CD14-positive monocyte (primary cell): ENCODE measurements at regions of chr5 and their contacts with region 1.

Region 1: DNA sequence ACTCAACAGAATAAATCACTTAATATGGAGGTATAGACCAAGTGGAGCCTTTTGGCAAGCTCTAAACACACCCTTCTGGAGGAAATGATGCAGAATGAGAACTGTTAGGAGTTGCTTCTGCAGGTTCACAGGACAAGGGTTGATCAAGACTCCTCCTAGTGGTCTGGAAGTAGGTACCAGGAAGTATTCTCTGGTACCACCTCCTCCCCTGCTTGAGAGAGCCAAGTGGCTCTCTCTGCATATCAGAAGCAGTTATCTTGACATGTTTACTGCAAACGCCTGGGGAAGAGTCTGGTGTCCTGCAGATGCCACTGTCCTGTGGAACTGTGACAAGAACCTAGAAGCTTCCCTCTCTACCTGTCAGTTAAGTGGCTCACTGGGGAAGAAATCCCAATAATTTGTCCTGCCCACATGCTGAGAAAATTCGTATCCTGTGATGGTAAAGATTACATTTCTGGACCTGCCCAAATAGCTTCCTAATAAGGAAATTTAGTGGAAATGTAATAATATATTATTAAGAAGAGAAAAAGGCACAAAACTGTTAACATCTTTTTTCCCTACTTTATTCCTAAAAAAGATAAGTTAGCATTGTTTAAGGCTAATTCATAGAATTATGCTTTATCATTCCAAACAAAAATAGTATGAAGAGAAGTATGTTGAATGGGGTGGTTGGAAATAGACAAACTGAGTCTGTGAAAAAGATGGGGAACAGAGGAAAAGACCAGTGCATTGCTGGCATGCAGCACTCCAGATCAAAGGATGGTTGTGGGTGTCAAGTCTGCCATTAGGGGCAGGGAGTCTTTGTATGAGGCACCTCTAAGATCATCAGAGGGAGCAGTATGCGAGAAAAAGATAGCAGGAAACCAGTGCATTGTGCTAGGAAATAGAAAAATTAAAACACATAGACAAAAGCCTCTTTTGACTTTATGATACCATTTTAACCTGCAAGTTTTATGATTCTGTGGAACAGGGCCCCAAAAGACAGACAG is 118.8 kb downstream of the CDC42SE2 start:
- DNase-seq: peak; percentile 56 to 72 (median 61)
- H3K4me3 ChIP-seq: no peak overlapping the region
- H3K4me3 Mint-ChIP-seq: no peak overlapping the region
- H3K27ac ChIP-seq: peak overlapping the region in 1 of 2 donors; percentile 93
- H3K27ac Mint-ChIP-seq: peak overlapping the region; percentile 69 to 99 (median 96)
- H3K4me1 ChIP-seq: peaks cover 45 to 49% of the 10 kb centered on the region in 2 donors
- H3K4me1 Mint-ChIP-seq: peaks cover 46% of the 10 kb centered on the region
- H3K27me3 ChIP-seq: no peaks in the 10 kb centered on the region
- H3K27me3 Mint-ChIP-seq: no peaks in the 10 kb centered on the region
- CTCF ChIP-seq: peak; percentile 75

Region 2: GRCh38 chr5:131165119-131165727 is 217.5 kb before region 1 on chr5 and contains the start of gene HINT1:
- intact Hi-C with region 1: loop called in 1 of 2 experiments (anchors 5 kb)
- DNase-seq: peak; percentile 79 to 87 (median 85)
- H3K4me3 ChIP-seq: peak within 1 kb of the TSS; percentile 60 to 93 (median 84)
- H3K4me3 Mint-ChIP-seq: peak within 1 kb of the TSS; percentile 94 to 95
- H3K27ac ChIP-seq: peak within 1 kb of the TSS; percentile 93 to 97
- H3K27ac Mint-ChIP-seq: peak within 1 kb of the TSS; percentile 89 to 95 (median 94)
- H3K4me1 ChIP-seq: peaks cover 24 to 33% of the 10 kb centered on the region in 2 donors
- H3K4me1 Mint-ChIP-seq: peaks cover 26% of the 10 kb centered on the region
- H3K27me3 ChIP-seq: no peaks in the 10 kb centered on the region
- H3K27me3 Mint-ChIP-seq: peaks cover 0 to 4% (median 0%) of the 10 kb centered on the region in 3 donors
- CTCF ChIP-seq: no peak
- polyA plus RNA-seq, gene HINT1: 148 to 223 (median 191) TPM

Region 3: DNA sequence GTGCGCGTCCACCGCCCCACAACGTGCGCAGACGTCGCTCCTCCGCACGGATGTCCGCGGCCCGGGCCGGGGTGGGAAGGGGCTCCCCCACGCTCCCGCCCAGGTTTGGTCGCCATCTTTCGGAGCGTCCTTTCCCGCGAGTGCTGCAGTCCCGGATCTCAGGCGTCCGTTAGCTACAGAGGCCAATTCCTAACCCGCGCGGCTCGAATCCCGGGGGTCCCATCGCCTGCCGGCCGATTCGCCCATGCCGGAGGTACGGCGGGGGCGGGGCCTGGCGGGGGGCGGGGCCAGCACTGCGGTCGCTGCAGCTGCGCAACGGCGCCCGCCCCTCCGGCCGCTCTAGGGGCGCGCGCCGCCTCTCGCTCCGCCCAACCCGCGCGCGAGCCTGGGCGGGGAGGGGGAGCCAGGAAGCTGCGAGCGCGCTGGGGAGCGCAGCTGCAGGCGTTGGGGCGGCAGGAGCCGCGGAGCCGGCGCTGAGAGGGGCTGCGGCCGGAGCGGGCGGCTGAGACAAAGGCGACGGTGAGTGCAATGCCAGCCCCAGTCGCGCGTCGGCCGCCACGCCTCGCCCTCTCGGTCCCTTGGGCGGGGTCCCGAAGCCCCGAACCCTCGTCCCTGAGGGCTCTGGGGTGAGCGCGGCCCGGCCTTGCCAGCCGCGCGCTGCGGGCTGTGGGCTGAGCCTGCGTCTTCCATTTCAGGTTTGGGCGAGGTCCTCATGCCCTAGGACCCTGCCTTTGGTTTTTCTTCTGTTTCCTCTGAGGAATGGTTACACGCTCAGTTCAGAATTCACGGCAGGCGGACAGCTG is 118.9 kb before region 1 on chr5 and contains the start of gene CDC42SE2:
- intact Hi-C with region 1: loop called in 1 of 2 experiments (anchors 5 kb)
- DNase-seq: peak; percentile 77 to 82 (median 78)
- H3K4me3 ChIP-seq: peak within 1 kb of the TSS; percentile 95 to 99 (median 99)
- H3K4me3 Mint-ChIP-seq: peak within 1 kb of the TSS; percentile 86 to 90
- H3K27ac ChIP-seq: peak within 1 kb of the TSS; percentile 90 to 91
- H3K27ac Mint-ChIP-seq: peak within 1 kb of the TSS; percentile 82 to 96 (median 92)
- H3K4me1 ChIP-seq: peaks cover 30 to 42% of the 10 kb centered on the region in 2 donors
- H3K4me1 Mint-ChIP-seq: peaks cover 31% of the 10 kb centered on the region
- H3K27me3 ChIP-seq: no peaks in the 10 kb centered on the region
- H3K27me3 Mint-ChIP-seq: peaks cover 0 to 2% (median 0%) of the 10 kb centered on the region in 3 donors
- CTCF ChIP-seq: no peak
- polyA plus RNA-seq, gene CDC42SE2: 34.4 to 135 (median 92.6) TPM

Region 4: GRCh38 chr5:131277875-131278740 is 104.6 kb before region 1 on chr5:
- intact Hi-C with region 1: loop called (anchors 5 to 10 kb)
- DNase-seq: no peak
- H3K4me3 ChIP-seq: no peak overlapping the region
- H3K4me3 Mint-ChIP-seq: no peak overlapping the region
- H3K27ac ChIP-seq: peak overlapping the region; percentile 4 to 57
- H3K27ac Mint-ChIP-seq: peak overlapping the region; percentile 57 to 87 (median 69)
- H3K4me1 ChIP-seq: peaks cover 22 to 46% of the 10 kb centered on the region in 2 donors
- H3K4me1 Mint-ChIP-seq: peaks cover 56% of the 10 kb centered on the region
- H3K27me3 ChIP-seq: no peaks in the 10 kb centered on the region
- H3K27me3 Mint-ChIP-seq: peaks cover 0 to 4% (median 0%) of the 10 kb centered on the region in 3 donors
- CTCF ChIP-seq: no peak

Region 5: DNA sequence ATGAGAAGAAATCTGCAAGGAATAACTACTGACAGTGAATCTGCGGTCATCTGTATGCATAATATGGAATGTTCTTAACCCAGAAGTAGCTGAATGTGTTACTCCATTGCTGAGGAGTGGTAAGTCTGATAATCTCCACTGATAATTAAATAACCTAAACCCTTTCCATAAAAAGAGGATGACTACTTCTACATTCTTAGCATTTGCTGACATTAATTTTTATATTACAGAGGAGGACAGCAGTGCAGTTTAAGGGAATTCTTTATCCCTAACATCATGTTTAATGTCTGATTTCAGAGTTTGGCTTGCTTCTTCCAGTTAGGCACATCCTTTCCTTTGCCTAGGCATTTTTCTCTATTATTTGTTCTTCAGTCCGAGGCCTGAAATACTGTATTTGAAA is 66.7 kb before region 1 on chr5:
- intact Hi-C with region 1: no loop called
- DNase-seq: no peak
- H3K4me3 ChIP-seq: no peak overlapping the region
- H3K4me3 Mint-ChIP-seq: no peak overlapping the region
- H3K27ac ChIP-seq: peak overlapping the region in 1 of 2 donors; percentile 48
- H3K27ac Mint-ChIP-seq: peak overlapping the region in 2 of 7 donors; percentile 3 to 24
- H3K4me1 ChIP-seq: peaks cover 0 to 6% of the 10 kb centered on the region in 2 donors
- H3K4me1 Mint-ChIP-seq: peaks cover 28% of the 10 kb centered on the region
- H3K27me3 ChIP-seq: no peaks in the 10 kb centered on the region
- H3K27me3 Mint-ChIP-seq: no peaks in the 10 kb centered on the region
- CTCF ChIP-seq: no peak